WTC11 (cell line): ENCODE measurements at regions of chr1 and their contacts with region 1.

Region 1: GRCh38 chr1:235415008-235415904 is 48.0 kb downstream of the TBCE start:
- DNase-seq: peak; percentile 69
- ATAC-seq: peak; percentile 90
- H3K4me3 Mint-ChIP-seq: no peak overlapping the region
- H3K27ac Mint-ChIP-seq: no peak overlapping the region
- H3K4me1 Mint-ChIP-seq: peaks cover 4% of the 10 kb centered on the region
- H3K27me3 Mint-ChIP-seq: no peaks in the 10 kb centered on the region
- CTCF ChIP-seq: peak; percentile 76

Region 2: DNA sequence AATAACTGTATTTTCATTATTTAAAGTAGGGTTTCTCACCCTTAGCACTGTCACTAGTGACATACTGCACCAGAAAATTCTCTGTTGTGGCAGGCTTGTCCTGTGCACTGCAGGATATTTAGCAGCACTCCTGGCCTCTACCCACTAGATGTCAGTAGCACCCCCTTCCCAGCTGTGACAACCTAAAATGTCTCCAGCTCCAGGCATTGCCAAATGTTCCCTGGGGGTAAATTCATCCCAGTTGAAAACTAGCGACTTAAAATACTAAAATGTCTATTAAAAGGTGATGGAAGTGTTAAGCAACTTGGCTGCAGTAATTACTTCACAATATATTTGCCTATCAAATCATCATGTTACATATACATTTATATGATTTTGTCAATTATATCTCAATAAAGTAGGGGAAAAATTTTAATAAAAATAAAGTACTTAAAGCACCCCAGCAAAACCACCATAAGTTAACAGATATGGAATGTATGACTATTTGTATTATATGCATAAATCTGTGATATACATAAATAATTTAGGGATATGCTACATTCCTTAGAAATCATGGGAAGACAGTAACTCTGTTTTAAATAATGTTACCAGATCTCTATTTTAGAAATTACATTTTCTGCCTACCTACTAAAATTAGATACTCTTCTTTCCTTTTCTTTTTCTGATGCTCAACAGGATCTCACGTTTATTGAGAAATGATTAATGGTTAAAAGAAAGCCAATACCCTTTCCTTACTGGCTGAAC is 161.9 kb before region 1 on chr1:
- CTCF ChIA-PET with region 1: interaction called, 14 read pairs
- POLR2A ChIA-PET with region 1: no interaction called
- DNase-seq: peak; percentile 72
- ATAC-seq: peak; percentile 99
- H3K4me3 Mint-ChIP-seq: no peak overlapping the region
- H3K27ac Mint-ChIP-seq: peak overlapping the region; percentile 78; the same call in 1 of the 2 replicates
- H3K4me1 Mint-ChIP-seq: peaks cover 11% of the 10 kb centered on the region
- H3K27me3 Mint-ChIP-seq: no peaks in the 10 kb centered on the region
- CTCF ChIP-seq: peak; percentile 32; the same call in 1 of the 2 replicates

Region 3: DNA sequence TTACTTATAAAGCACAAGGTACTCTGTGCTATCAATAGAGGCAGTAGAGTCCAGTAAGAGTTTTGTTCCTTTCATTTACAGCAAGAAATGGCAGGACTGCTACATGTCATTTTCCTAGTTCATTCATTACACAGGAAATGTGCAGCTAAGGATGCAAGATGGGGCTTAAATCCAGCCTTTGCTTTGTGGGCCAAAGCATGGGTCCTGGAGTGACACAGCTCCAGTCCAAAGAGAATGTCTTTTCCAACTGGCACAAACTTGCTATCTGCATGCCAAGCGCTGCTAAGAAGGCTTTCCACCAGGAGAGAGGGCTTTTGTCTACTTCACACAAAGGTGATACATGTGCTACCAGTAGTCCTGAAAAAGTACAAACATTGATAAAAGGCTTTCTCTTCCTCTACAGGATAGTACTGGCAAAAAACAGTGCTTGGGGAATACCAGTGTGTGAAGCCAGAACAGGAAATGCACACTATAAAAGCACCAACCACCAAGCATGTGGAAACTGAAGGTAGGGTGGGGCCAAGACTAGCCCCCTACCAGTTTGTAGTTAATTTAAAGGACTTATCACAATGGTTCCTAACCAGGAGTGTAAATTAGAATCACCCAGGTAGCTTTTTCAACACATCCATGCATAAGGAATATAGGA is 156.0 kb before region 1 on chr1:
- CTCF ChIA-PET with region 1: interaction called, 16 read pairs
- POLR2A ChIA-PET with region 1: no interaction called
- DNase-seq: no peak
- ATAC-seq: peak; percentile 88
- H3K4me3 Mint-ChIP-seq: peak overlapping the region; percentile 22; the same call in 1 of the 2 replicates
- H3K27ac Mint-ChIP-seq: peak overlapping the region; percentile 79
- H3K4me1 Mint-ChIP-seq: peaks cover 29% of the 10 kb centered on the region
- H3K27me3 Mint-ChIP-seq: no peaks in the 10 kb centered on the region
- CTCF ChIP-seq: no peak